Right lobe of liver (tissue), 6 donors: ENCODE measurements at regions of chr5 and their contacts with region 1.

Region 1: GRCh38 chr5:34474573-34475021 is 181.5 kb upstream of the RAI14 start:
- DNase-seq: no peak
- ATAC-seq: peak; percentile 94 to 98 (median 96)
- H3K4me3 ChIP-seq: no peak overlapping the region
- H3K27ac ChIP-seq: no peak overlapping the region
- H3K4me1 ChIP-seq: no peaks in the 10 kb centered on the region
- H3K27me3 ChIP-seq: no peaks in the 10 kb centered on the region
- CTCF ChIP-seq: peak; percentile 96 to 97 (median 96)
- POLR2A ChIP-seq: no peak

Region 2: DNA sequence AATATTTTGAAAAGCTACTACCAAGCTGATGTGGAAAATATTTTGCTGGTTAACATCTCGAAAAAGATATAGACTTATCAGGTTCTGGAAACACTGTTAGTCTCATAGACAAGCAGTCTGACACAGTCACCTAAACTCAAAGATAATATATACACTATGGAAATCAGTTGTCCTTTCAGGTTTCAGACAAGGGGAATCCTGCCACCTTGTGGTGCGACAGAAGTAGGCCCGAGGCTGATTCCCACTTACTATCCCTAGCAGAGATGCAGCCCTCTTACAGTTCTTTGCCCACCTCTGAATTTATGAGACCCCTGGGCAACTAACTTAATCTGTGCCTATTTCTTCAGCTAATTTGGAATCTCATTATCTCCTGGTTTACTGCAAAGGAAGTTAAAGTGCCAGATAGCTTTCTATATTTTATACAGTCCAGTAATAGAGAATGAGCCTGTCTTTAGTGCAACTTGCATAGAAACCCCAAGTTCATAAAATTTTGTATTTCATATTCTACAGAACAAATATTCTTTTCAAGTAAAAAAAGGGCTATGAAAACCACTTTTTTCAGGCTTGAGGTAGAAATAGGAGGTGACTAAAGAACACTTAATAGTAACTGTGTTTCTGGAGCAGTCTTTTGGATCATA is 423.8 kb after region 1 on chr5:
- intact Hi-C with region 1: loop called (anchors 5 kb)
- DNase-seq: peak; percentile 46 to 61 (median 54)
- ATAC-seq: peak; percentile 91 to 95 (median 94)
- H3K4me3 ChIP-seq: no peak overlapping the region
- H3K27ac ChIP-seq: no peak overlapping the region
- H3K4me1 ChIP-seq: no peaks in the 10 kb centered on the region
- H3K27me3 ChIP-seq: no peaks in the 10 kb centered on the region
- CTCF ChIP-seq: peak; percentile 75 to 94 (median 88)
- POLR2A ChIP-seq: no peak